A549 (cell line): ENCODE measurements at regions of chr17 and their contacts with region 1.

Region 1: GRCh38 chr17:28623696-28624095 is 9.7 kb upstream of the RSKR start:
- DNase-seq: no peak
- ATAC-seq: no peak
- H3K4me3 ChIP-seq: no peak overlapping the region
- H3K27ac ChIP-seq: no peak overlapping the region
- H3K4me1 ChIP-seq: no peaks in the 10 kb centered on the region
- CTCF ChIP-seq: no peak
- EP300 ChIP-seq: no peak
- POLR2A ChIP-seq: no peak
- RAD21 ChIP-seq: no peak

Region 2: GRCh38 chr17:28634206-28634856 is 10.6 kb after region 1 on chr17:
- CTCF ChIA-PET with region 1: interaction called, 11 read pairs
- POLR2A ChIA-PET with region 1: no interaction called
- DNase-seq: no peak
- ATAC-seq: no peak
- H3K4me3 ChIP-seq: no peak overlapping the region
- H3K27ac ChIP-seq: no peak overlapping the region
- H3K4me1 ChIP-seq: no peaks in the 10 kb centered on the region
- CTCF ChIP-seq: no peak
- EP300 ChIP-seq: no peak
- POLR2A ChIP-seq: no peak
- RAD21 ChIP-seq: no peak

Region 3: GRCh38 chr17:28717578-28718333 is 94.1 kb after region 1 on chr17 and contains the start of gene RAB34:
- CTCF ChIA-PET with region 1: no interaction called
- POLR2A ChIA-PET with region 1: no interaction called
- DNase-seq: peak; percentile 73 to 90
- ATAC-seq: peak; percentile 67 to 69
- H3K4me3 ChIP-seq: peak within 1 kb of the TSS; percentile 77
- H3K27ac ChIP-seq: peak within 1 kb of the TSS; percentile 96
- H3K4me1 ChIP-seq: peaks cover 37% of the 10 kb centered on the region
- CTCF ChIP-seq: peak; percentile 55
- EP300 ChIP-seq: no peak
- POLR2A ChIP-seq: peak; percentile 48
- RAD21 ChIP-seq: no peak
- polyA plus RNA-seq, gene RAB34: 288 and 328 TPM in 2 replicates